Motor neuron (in vitro differentiated cells): ENCODE measurements at regions of chr2 and their contacts with region 1.

Region 1: DNA sequence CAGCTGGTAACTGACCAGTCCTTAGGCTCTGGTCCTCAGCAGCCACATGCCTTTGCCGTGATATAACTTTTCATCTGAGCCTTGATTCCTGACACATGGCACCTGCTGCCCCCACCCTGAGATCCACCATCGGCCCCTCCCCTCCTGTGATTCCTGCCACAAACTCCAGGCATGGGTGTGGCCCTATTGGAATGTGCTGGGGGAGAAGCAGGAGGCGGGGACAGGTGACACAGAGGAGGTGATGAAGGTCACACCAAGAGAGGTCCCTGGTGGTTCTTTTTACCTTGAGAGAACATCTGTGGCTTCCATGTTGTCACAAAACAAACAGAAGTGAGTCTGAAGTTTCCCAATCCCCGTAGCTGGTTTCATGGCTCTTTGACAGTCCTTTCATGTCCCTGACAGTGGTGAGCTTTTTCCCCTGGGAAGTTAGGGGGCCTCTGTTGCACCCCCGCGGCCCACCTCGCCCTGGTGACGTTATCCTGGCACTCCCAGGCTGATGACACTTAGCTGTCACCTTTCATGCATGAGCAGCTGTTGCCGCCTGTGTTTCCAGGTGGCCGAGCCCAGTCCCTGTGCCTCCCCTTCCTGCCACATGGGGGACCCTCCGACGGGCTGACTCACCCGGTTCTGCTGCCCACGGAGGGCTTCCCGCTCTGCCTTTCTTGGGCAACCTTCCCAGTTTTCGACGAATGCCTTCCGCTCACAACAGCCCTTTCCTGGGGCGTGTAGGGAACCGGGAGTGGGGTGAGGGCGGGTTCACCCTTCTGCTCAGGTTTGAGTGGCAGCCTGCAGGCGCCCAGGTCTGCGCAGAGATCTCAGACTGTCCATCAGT is 66.3 kb upstream of the GLI2 start:
- ATAC-seq: peak; percentile 35 to 76 (median 61)
- H3K4me3 ChIP-seq: no peak overlapping the region
- H3K27ac ChIP-seq: no peak overlapping the region
- H3K4me1 ChIP-seq: no peaks in the 10 kb centered on the region

Region 2: DNA sequence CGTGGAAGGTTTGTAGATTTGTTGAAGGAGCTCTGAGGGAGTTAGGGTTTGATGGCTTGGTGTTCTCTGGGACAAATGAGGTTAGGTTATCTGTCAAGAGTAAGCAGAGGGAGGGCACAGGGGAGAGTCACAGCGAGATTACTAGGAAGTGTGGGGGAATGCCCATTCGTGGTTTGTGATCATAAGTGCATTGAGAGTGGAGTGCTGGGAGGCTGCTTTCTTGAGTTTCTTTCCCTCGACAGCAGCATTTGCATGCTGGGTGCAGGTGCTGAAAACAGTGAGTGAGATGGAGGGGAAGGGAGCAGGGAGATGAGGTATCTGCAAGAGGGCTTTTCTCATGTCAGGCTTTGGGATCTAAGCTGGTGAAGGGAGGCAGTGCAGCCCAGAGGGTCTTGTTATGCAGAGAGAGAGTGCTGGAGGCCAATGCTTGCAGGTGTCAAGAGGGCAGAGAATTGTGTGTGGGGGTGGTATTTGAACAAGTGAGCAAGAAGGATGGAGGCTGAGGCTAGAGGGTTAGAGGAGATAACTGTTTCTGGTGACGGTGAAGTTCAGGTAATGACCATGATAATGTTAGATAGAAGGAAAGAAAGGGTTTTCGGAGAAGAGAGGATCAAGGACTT is 407.8 kb before region 1 on chr2:
- in situ Hi-C with region 1: no loop called
- ATAC-seq: no peak
- H3K4me3 ChIP-seq: no peak overlapping the region
- H3K27ac ChIP-seq: no peak overlapping the region
- H3K4me1 ChIP-seq: peaks cover 0 to 6% of the 10 kb centered on the region in 2 donors

Region 3: GRCh38 chr2:120539937-120540718 is 129.2 kb before region 1 on chr2:
- in situ Hi-C with region 1: loop called in 1 of 9 experiments (anchors 25 kb)
- ATAC-seq: peak; percentile 77 to 97 (median 90)
- H3K4me3 ChIP-seq: no peak overlapping the region
- H3K27ac ChIP-seq: no peak overlapping the region
- H3K4me1 ChIP-seq: peaks cover 17 to 19% of the 10 kb centered on the region in 2 donors

Region 4: GRCh38 chr2:120552800-120553481 is 116.4 kb before region 1 on chr2:
- in situ Hi-C with region 1: loop called in 2 of 9 experiments (anchors 25 kb)
- ATAC-seq: peak in 7 of 8 experiments; percentile 63 to 84 (median 75)
- H3K4me3 ChIP-seq: no peak overlapping the region
- H3K27ac ChIP-seq: no peak overlapping the region
- H3K4me1 ChIP-seq: peaks cover 12 to 29% of the 10 kb centered on the region in 2 donors

Region 5: GRCh38 chr2:120613742-120614571 is 55.4 kb before region 1 on chr2:
- in situ Hi-C with region 1: no loop called
- ATAC-seq: peak; percentile 76 to 97 (median 85)
- H3K4me3 ChIP-seq: no peak overlapping the region
- H3K27ac ChIP-seq: no peak overlapping the region
- H3K4me1 ChIP-seq: peaks cover 11 to 19% of the 10 kb centered on the region in 2 donors